ENCODE measurements at regions of chr5 and their contacts with region 1.

Region 1: GRCh38 chr5:135887351-135887864 is 8.2 kb downstream of the IL9 start:
- DNase-seq: peak; percentile 64
- H3K4me3 ChIP-seq: no peak overlapping the region
- H3K27ac ChIP-seq: no peak overlapping the region
- H3K4me1 ChIP-seq: peaks cover 3% of the 10 kb centered on the region
- H3K27me3 ChIP-seq: no peaks in the 10 kb centered on the region
- CTCF ChIP-seq: peak; percentile 81 to 83

Region 2: DNA sequence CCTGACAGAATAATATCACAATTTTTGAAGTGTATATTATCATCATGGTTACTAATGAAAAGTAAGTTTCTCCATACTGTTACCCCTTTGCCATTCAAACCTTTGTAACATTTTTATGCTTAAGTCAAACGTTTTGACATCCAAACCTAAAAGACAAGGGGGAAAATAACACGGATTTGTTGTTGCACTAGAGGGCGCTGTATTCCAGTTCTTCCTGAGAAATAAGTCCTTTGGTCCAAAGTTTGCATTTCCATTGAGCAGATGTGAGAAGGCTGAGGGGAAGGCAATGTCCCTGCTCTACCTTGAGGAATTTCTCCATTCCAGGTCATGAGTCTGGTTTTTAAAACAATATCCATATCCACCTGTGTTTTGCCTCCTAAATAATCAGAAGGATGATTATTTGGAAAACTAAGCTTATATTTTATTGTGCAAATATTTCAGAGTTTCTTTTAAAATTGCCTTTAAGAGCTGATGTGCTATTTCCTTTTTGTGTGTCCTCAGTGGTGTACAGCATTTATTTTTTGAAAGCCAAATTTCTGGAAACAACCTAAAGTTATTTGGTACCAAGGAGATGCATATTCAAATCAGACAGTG is 57.7 kb after region 1 on chr5:
- CTCF ChIA-PET with region 1: no interaction called
- dilution Hi-C with region 1: no loop called
- in situ Hi-C with region 1: no loop called
- intact Hi-C with region 1: loop called (anchors 1 kb)
- DNase-seq: peak; percentile 63
- H3K4me3 ChIP-seq: no peak overlapping the region
- H3K27ac ChIP-seq: no peak overlapping the region
- H3K4me1 ChIP-seq: no peaks in the 10 kb centered on the region
- H3K27me3 ChIP-seq: no peaks in the 10 kb centered on the region
- CTCF ChIP-seq: peak; percentile 51 to 75

Region 3: GRCh38 chr5:136080483-136081216 is 193.2 kb after region 1 on chr5:
- CTCF ChIA-PET with region 1: no interaction called
- dilution Hi-C with region 1: no loop called
- in situ Hi-C with region 1: loop called (anchors 5 to 10 kb)
- intact Hi-C with region 1: loop called (anchors 1 kb)
- DNase-seq: peak; percentile 95
- H3K4me3 ChIP-seq: peak overlapping the region; percentile 38 to 53 (median 48)
- H3K27ac ChIP-seq: peak overlapping the region; percentile 55
- H3K4me1 ChIP-seq: peaks cover 11% of the 10 kb centered on the region
- H3K27me3 ChIP-seq: no peaks in the 10 kb centered on the region
- CTCF ChIP-seq: no peak

Region 4: GRCh38 chr5:136212252-136212721 is 324.9 kb after region 1 on chr5:
- CTCF ChIA-PET with region 1: no interaction called
- dilution Hi-C with region 1: loop called (anchors 25 kb)
- in situ Hi-C with region 1: loop called in 1 of 2 experiments (anchors 10 kb)
- intact Hi-C with region 1: loop called (anchors 1 kb)
- DNase-seq: no peak
- H3K4me3 ChIP-seq: no peak overlapping the region
- H3K27ac ChIP-seq: no peak overlapping the region
- H3K4me1 ChIP-seq: no peaks in the 10 kb centered on the region
- H3K27me3 ChIP-seq: no peaks in the 10 kb centered on the region
- CTCF ChIP-seq: peak; percentile 79 to 90

Region 5: DNA sequence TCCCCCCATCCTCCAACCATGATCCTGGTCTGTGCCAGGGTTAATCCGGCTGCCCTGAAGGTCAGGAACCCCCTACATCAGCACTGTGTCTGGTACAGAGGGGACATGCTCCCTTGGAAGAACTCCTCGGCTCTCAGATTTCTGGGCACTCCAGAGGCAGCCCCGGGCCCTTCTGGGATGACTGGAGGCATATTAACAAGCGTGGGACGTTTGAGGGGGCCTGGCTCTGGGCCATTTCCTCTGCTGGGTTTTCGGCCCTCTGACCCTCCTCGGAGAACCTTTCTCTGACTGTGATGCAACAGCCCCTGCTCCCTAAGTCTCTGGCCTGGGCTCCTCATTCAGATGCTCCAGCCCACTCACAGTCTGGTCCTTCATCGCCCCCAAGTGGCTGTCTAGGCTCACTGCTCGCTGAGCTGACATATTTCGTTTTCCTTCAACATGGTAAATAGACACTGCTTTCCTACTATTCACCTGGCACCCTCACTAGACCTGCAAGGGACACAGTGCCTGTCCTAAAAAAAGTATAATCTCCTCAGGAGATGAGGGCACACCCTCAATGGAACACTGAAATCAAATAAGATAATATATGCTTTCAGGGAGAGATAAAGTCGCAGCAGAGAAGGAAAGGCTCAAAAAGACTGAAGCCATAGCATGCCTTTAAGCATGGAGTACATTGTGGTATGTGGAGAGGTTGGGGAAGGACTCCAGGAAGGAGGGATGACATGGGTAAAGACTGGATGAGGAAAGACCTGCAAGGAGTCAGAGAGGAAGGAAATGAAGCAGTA is 882.7 kb after region 1 on chr5:
- CTCF ChIA-PET with region 1: no interaction called
- dilution Hi-C with region 1: no loop called
- in situ Hi-C with region 1: no loop called
- intact Hi-C with region 1: loop called (anchors 10 kb)
- DNase-seq: peak; percentile 45
- H3K4me3 ChIP-seq: no peak overlapping the region
- H3K27ac ChIP-seq: no peak overlapping the region
- H3K4me1 ChIP-seq: no peaks in the 10 kb centered on the region
- H3K27me3 ChIP-seq: peaks cover 2% of the 10 kb centered on the region
- CTCF ChIP-seq: peak; percentile 93 to 95

Measured in mammary epithelial cell (primary cell).